Breast epithelium (tissue), 4 donors: ENCODE measurements at regions of chr1 and their contacts with region 1.

Region 1: DNA sequence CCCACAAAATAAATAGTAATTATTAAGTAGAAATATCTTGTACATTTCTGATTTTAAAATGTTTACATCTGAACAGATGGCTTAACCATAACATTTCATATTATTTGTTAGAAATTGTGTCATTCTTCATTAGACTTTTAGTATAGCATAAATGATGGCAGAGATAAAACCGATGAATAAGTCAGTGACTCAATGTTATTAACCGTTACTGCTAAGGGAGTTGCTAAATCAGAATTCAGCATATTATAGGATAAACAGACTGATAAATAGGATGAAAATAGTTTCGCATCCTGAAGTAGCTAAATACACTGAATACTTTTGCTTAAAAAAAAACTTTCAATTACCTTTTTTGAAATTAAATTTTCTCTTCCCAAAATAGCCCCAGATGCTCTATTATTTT is 610.6 kb upstream of the ZP4 start:
- DNase-seq: no peak
- H3K4me3 ChIP-seq: no peak overlapping the region
- H3K27ac ChIP-seq: no peak overlapping the region
- H3K4me1 ChIP-seq: no peaks in the 10 kb centered on the region
- H3K27me3 ChIP-seq: no peaks in the 10 kb centered on the region
- CTCF ChIP-seq: no peak
- POLR2A ChIP-seq: no peak

Region 2: GRCh38 chr1:238476841-238477240 is 24.4 kb before region 1 on chr1:
- intact Hi-C with region 1: no loop called
- DNase-seq: no peak
- H3K4me3 ChIP-seq: no peak overlapping the region
- H3K27ac ChIP-seq: no peak overlapping the region
- H3K4me1 ChIP-seq: no peaks in the 10 kb centered on the region
- H3K27me3 ChIP-seq: no peaks in the 10 kb centered on the region
- CTCF ChIP-seq: no peak
- POLR2A ChIP-seq: no peak

Region 3: DNA sequence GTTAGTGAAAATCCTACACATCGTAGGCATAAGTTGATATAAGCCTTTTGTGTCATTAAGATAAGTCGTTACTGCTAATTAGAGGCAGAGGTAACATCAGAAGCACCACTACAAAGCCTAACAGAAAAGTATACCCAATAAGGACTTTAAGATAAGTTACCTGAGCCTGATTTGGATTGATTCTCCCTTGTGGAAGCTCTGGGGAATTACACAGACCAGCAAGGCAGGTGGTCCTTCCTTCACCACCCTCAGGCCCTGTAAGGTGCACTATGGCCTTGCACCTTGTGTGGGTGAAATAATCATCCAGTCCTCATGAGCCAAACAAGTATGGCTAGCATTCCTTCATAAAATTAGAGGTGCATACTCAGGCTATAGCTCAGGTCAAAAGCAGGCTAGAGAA is 718.4 kb after region 1 on chr1:
- intact Hi-C with region 1: loop called (anchors 5 kb)
- DNase-seq: no peak
- H3K4me3 ChIP-seq: no peak overlapping the region
- H3K27ac ChIP-seq: no peak overlapping the region
- H3K4me1 ChIP-seq: no peaks in the 10 kb centered on the region
- H3K27me3 ChIP-seq: no peaks in the 10 kb centered on the region
- CTCF ChIP-seq: no peak
- POLR2A ChIP-seq: no peak